ENCODE measurements at regions of chr2 and their contacts with region 1.

Region 1: GRCh38 chr2:224650815-224651439 is 65.2 kb downstream of the CCDC195 start:
- DNase-seq: peak; percentile 45 to 64 (median 49)
- H3K4me3 ChIP-seq: no peak overlapping the region
- H3K27ac ChIP-seq: no peak overlapping the region
- H3K4me1 ChIP-seq: peaks cover 0 to 2% (median 0%) of the 10 kb centered on the region in 4 experiments
- H3K27me3 ChIP-seq: no peaks in the 10 kb centered on the region

Region 2: GRCh38 chr2:224357098-224357901 is 293.6 kb before region 1 on chr2:
- CTCF ChIA-PET with region 1: interaction called, 28 read pairs
- POLR2A ChIA-PET with region 1: no interaction called
- DNase-seq: peak; percentile 77 to 90 (median 82)
- H3K4me3 ChIP-seq: no peak overlapping the region
- H3K27ac ChIP-seq: no peak overlapping the region
- H3K4me1 ChIP-seq: no peaks in the 10 kb centered on the region
- H3K27me3 ChIP-seq: peaks cover 0 to 2% (median 0%) of the 10 kb centered on the region in 5 experiments

Region 3: GRCh38 chr2:224585205-224586088 is 65.5 kb before region 1 on chr2 and contains the start of gene CUL3:
- CTCF ChIA-PET with region 1: interaction called, 11 read pairs
- POLR2A ChIA-PET with region 1: no interaction called
- DNase-seq: peak; percentile 97 to 98 (median 98)
- H3K4me3 ChIP-seq: peak within 1 kb of the TSS; percentile 83 to 99 (median 93)
- H3K27ac ChIP-seq: peak within 1 kb of the TSS; percentile 82 to 85
- H3K4me1 ChIP-seq: peaks cover 17 to 46% (median 29%) of the 10 kb centered on the region in 4 experiments
- H3K27me3 ChIP-seq: no peaks in the 10 kb centered on the region